ENCODE measurements at regions of chr14 and their contacts with region 1.

Region 1: DNA sequence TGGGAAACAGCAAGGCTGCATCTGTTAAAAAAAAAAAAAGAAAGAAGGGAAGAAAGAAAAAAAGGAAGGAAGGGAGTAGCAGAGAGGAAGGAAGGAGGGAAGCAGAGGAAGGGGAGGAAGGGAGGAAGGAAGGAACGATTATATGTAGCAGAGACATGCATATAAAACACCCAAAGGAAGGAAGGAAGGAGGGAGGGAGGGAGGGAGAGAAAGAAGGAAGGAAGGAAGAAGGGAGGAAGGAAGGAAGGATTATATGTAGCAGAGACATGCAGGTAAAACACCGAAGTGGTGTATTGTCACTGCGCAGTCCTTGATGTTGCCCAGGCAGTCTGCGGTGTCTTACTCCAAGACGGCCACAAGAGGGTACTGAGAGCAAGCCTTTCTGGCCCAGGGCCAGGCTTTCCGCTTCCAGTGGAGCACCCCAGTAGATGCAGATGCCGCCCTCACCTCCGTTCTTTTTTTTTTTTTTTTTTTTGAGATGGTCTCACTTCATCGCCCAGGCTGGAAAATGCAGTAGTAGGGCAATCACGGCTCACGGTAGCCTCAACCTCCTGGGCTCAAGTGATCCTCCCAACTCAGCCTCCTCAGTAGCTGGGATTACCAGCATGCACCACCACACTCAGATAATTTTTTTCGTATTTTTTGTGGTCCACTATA is 5.8 kb upstream of the LBHD2 start:
- DNase-seq: peak; percentile 69
- H3K4me3 ChIP-seq: no peak overlapping the region
- H3K27ac ChIP-seq: no peak overlapping the region
- H3K4me1 ChIP-seq: peaks cover 8% of the 10 kb centered on the region
- H3K27me3 ChIP-seq: peaks cover 0 to 2% of the 10 kb centered on the region in 2 experiments
- CTCF ChIP-seq: peak; percentile 63 to 90
- POLR2A ChIP-seq: no peak

Region 2: GRCh38 chr14:103031956-103032355 is 46.3 kb before region 1 on chr14:
- CTCF ChIA-PET with region 1: interaction called, 10 read pairs
- POLR2A ChIA-PET with region 1: interaction called, 7 read pairs
- dilution Hi-C with region 1: no loop called
- intact Hi-C with region 1: no loop called
- DNase-seq: peak; percentile 25
- H3K4me3 ChIP-seq: no peak overlapping the region
- H3K27ac ChIP-seq: no peak overlapping the region
- H3K4me1 ChIP-seq: peaks cover 13% of the 10 kb centered on the region
- H3K27me3 ChIP-seq: no peaks in the 10 kb centered on the region
- CTCF ChIP-seq: peak in 1 of 2 donors; percentile 24
- POLR2A ChIP-seq: no peak

Region 3: DNA sequence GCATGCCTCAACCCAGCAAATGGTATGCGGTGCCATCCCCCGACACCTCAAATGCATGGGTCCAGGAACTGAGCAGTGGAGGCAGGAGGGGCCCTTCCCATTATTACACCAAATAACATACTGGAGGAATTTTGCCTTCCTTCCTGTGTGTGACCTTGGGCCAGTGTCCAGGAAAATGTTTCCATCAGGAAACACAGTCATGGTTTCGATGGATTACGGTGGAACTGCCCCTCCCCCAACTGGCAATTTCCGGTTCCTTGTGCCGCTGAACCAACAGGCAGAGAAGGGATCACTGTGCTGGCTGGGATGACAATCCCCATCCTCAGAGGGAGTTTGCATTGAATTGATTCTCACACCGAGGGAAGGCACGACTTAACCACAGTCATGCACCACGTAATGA is 11.8 kb before region 1 on chr14:
- CTCF ChIA-PET with region 1: interaction called, 5 read pairs
- POLR2A ChIA-PET with region 1: no interaction called
- dilution Hi-C with region 1: no loop called
- intact Hi-C with region 1: loop called (anchors 1 kb)
- DNase-seq: peak; percentile 90
- H3K4me3 ChIP-seq: no peak overlapping the region
- H3K27ac ChIP-seq: peak overlapping the region; percentile 49
- H3K4me1 ChIP-seq: peaks cover 22% of the 10 kb centered on the region
- H3K27me3 ChIP-seq: no peaks in the 10 kb centered on the region
- CTCF ChIP-seq: no peak
- POLR2A ChIP-seq: peak; percentile 63

Region 4: GRCh38 chr14:103141119-103141796 is 63.0 kb after region 1 on chr14:
- CTCF ChIA-PET with region 1: interaction called, 3 read pairs
- POLR2A ChIA-PET with region 1: no interaction called
- dilution Hi-C with region 1: no loop called
- intact Hi-C with region 1: loop called (anchors 1 kb)
- DNase-seq: peak; percentile 41
- H3K4me3 ChIP-seq: no peak overlapping the region
- H3K27ac ChIP-seq: no peak overlapping the region
- H3K4me1 ChIP-seq: no peaks in the 10 kb centered on the region
- H3K27me3 ChIP-seq: peaks cover 26 to 38% of the 10 kb centered on the region in 2 experiments
- CTCF ChIP-seq: peak; percentile 75 to 80
- POLR2A ChIP-seq: no peak

Region 5: DNA sequence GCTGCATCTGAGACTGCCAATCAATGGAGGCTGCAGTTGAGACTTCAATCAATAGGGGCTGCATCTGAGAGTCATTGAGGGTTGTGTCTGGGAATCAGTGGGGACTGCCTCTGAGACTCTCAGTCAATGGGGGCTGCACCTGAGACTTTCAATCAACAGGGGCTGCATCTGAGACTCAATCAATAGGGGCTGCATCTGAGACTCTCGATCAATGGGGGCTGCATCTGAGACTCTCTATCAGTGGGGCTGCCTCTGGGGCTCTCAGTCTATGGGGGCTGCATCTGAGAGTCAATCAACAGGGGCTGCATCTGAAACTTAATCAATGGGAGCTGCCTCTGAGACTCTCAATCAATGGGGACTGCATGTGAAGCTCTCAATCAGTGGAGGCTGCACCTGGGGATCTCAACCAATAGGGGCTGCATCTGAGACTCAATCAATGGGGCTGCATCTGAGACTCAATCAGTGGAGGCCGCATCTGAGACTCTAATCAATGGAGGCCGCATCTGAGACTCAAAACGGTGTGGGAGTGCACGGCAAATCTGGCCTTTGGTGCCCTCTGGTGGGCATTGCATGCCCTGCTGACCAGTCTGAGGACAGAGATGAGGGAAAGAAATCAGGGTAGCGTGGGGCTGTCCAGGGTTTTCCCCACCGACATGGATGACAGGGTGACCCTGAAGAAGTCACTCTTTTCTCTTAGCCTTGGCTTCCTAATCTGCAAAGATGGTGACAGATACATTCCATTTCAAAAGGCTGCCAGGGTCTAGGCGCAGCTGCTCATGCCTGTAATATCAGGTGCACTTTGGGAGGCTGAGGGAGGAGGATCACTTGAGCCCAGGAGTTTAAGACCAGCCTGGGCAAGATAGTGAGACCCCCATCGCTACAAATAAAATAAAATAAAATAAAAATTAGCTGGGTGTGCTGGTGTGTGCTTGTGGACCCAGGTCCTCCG is 214.5 kb after region 1 on chr14:
- CTCF ChIA-PET with region 1: interaction called, 12 read pairs
- POLR2A ChIA-PET with region 1: interaction called, 10 read pairs
- dilution Hi-C with region 1: no loop called
- intact Hi-C with region 1: loop called (anchors 1 kb)
- DNase-seq: peak; percentile 53
- H3K4me3 ChIP-seq: no peak overlapping the region
- H3K27ac ChIP-seq: no peak overlapping the region
- H3K4me1 ChIP-seq: no peaks in the 10 kb centered on the region
- H3K27me3 ChIP-seq: peaks cover 0 to 4% of the 10 kb centered on the region in 2 experiments
- CTCF ChIP-seq: peak; percentile 90
- POLR2A ChIP-seq: no peak

Region 6: GRCh38 chr14:103546652-103547454 is 468.6 kb after region 1 on chr14:
- CTCF ChIA-PET with region 1: no interaction called
- POLR2A ChIA-PET with region 1: no interaction called
- dilution Hi-C with region 1: no loop called
- intact Hi-C with region 1: no loop called
- DNase-seq: peak; percentile 40
- H3K4me3 ChIP-seq: no peak overlapping the region
- H3K27ac ChIP-seq: no peak overlapping the region
- H3K4me1 ChIP-seq: no peaks in the 10 kb centered on the region
- H3K27me3 ChIP-seq: no peaks in the 10 kb centered on the region
- CTCF ChIP-seq: peak; percentile 82 to 88
- POLR2A ChIP-seq: no peak

Measured in endothelial cell of umbilical vein (primary cell).